ENCODE measurements at regions of chr16 and their contacts with region 1.

Region 1: GRCh38 chr16:65196080-65197075 is 74.5 kb upstream of the CDH11 start:
- DNase-seq: peak; percentile 27
- ATAC-seq: peak; percentile 85
- H3K4me3 ChIP-seq: no peak overlapping the region
- H3K27ac ChIP-seq: no peak overlapping the region
- H3K4me1 ChIP-seq: peaks cover 3% of the 10 kb centered on the region
- H3K27me3 ChIP-seq: no peaks in the 10 kb centered on the region; the same call in 1 of the 2 replicates
- CTCF ChIP-seq: no peak
- POLR2A ChIP-seq: no peak
- RAD21 ChIP-seq: no peak

Region 2: GRCh38 chr16:65489531-65490023 is 293.2 kb after region 1 on chr16:
- CTCF ChIA-PET with region 1: no interaction called
- POLR2A ChIA-PET with region 1: interaction called, 11 read pairs
- dilution Hi-C with region 1: no loop called
- in situ Hi-C with region 1: no loop called
- intact Hi-C with region 1: no loop called
- DNase-seq: no peak
- ATAC-seq: no peak
- H3K4me3 ChIP-seq: no peak overlapping the region
- H3K27ac ChIP-seq: no peak overlapping the region
- H3K4me1 ChIP-seq: no peaks in the 10 kb centered on the region
- H3K27me3 ChIP-seq: no peaks in the 10 kb centered on the region; the same call in 1 of the 2 replicates
- CTCF ChIP-seq: no peak
- POLR2A ChIP-seq: no peak
- RAD21 ChIP-seq: no peak

Measured in IMR-90 (cell line).